ENCODE measurements at regions of chr13 and their contacts with region 1.

Region 1: GRCh38 chr13:27523346-27524073 is 73.1 kb upstream of the MTIF3 start:
- DNase-seq: no peak
- ATAC-seq: no peak
- H3K4me3 ChIP-seq: no peak overlapping the region
- H3K27ac ChIP-seq: no peak overlapping the region
- H3K4me1 ChIP-seq: no peaks in the 10 kb centered on the region
- H3K27me3 ChIP-seq: peaks cover 0 to 2% of the 10 kb centered on the region in 2 experiments; a peak in 2 of 5 replicates
- CTCF ChIP-seq: no peak
- EP300 ChIP-seq: no peak
- POLR2A ChIP-seq: no peak
- RAD21 ChIP-seq: no peak

Region 2: GRCh38 chr13:27953676-27954405 is 430.3 kb after region 1 on chr13:
- CTCF ChIA-PET with region 1: no interaction called
- POLR2A ChIA-PET with region 1: no interaction called
- in situ Hi-C with region 1: loop called (anchors 25 kb)
- intact Hi-C with region 1: no loop called
- DNase-seq: peak; percentile 55 to 66 (median 57)
- ATAC-seq: peak; percentile 99
- H3K4me3 ChIP-seq: no peak overlapping the region
- H3K27ac ChIP-seq: no peak overlapping the region
- H3K4me1 ChIP-seq: peaks cover 0 to 13% of the 10 kb centered on the region in 2 experiments; a peak in 2 of 5 replicates
- H3K27me3 ChIP-seq: peaks cover 2 to 9% of the 10 kb centered on the region in 2 experiments; a peak in 1 of 5 replicates
- CTCF ChIP-seq: peak; percentile 63 to 87 (median 68)
- EP300 ChIP-seq: no peak
- POLR2A ChIP-seq: no peak
- RAD21 ChIP-seq: peak; percentile 29 to 61; a peak in 3 of 4 replicates

Region 3: GRCh38 chr13:28035139-28035782 is 511.8 kb after region 1 on chr13:
- CTCF ChIA-PET with region 1: no interaction called
- POLR2A ChIA-PET with region 1: no interaction called
- in situ Hi-C with region 1: no loop called
- intact Hi-C with region 1: no loop called
- DNase-seq: no peak
- ATAC-seq: no peak
- H3K4me3 ChIP-seq: no peak overlapping the region
- H3K27ac ChIP-seq: no peak overlapping the region
- H3K4me1 ChIP-seq: no peaks in the 10 kb centered on the region; a peak in 1 of 5 replicates
- H3K27me3 ChIP-seq: peaks cover 2 to 12% of the 10 kb centered on the region in 2 experiments
- CTCF ChIP-seq: no peak
- EP300 ChIP-seq: no peak
- POLR2A ChIP-seq: no peak
- RAD21 ChIP-seq: no peak

Measured in K562 (cell line).